HCT116 (cell line): ENCODE measurements at regions of chr2 and their contacts with region 1.

Region 1: GRCh38 chr2:66429071-66429477 is 5.9 kb upstream of the MEIS1 start:
- DNase-seq: peak; percentile 18
- ATAC-seq: 0 out of 2 replicates have a peak, but pooled peaks have one; percentile 53
- H3K4me3 ChIP-seq: no peak overlapping the region
- H3K27ac ChIP-seq: no peak overlapping the region
- H3K4me1 ChIP-seq: no peaks in the 10 kb centered on the region
- H3K27me3 ChIP-seq: no peaks in the 10 kb centered on the region
- CTCF ChIP-seq: peak; percentile 36 to 79 (median 64); a peak in 5 of 6 replicates
- POLR2A ChIP-seq: no peak
- RAD21 ChIP-seq: peak; percentile 68

Region 2: GRCh38 chr2:65647249-65647842 is 781.7 kb before region 1 on chr2:
- CTCF ChIA-PET with region 1: no interaction called
- POLR2A ChIA-PET with region 1: no interaction called
- RAD21 ChIA-PET with region 1: no interaction called
- intact Hi-C with region 1: loop called (anchors 10 kb)
- DNase-seq: no peak
- ATAC-seq: no peak
- H3K4me3 ChIP-seq: no peak overlapping the region
- H3K27ac ChIP-seq: no peak overlapping the region
- H3K4me1 ChIP-seq: no peaks in the 10 kb centered on the region
- H3K27me3 ChIP-seq: no peaks in the 10 kb centered on the region
- CTCF ChIP-seq: no peak
- POLR2A ChIP-seq: no peak
- RAD21 ChIP-seq: no peak

Region 3: GRCh38 chr2:66649006-66649405 is 219.9 kb after region 1 on chr2:
- CTCF ChIA-PET with region 1: no interaction called
- POLR2A ChIA-PET with region 1: no interaction called
- RAD21 ChIA-PET with region 1: no interaction called
- intact Hi-C with region 1: no loop called
- DNase-seq: no peak
- ATAC-seq: no peak
- H3K4me3 ChIP-seq: no peak overlapping the region
- H3K27ac ChIP-seq: no peak overlapping the region
- H3K4me1 ChIP-seq: no peaks in the 10 kb centered on the region
- H3K27me3 ChIP-seq: no peaks in the 10 kb centered on the region
- CTCF ChIP-seq: no peak
- POLR2A ChIP-seq: no peak
- RAD21 ChIP-seq: no peak

Region 4: GRCh38 chr2:67322353-67323001 is 893.4 kb after region 1 on chr2:
- CTCF ChIA-PET with region 1: no interaction called
- POLR2A ChIA-PET with region 1: no interaction called
- RAD21 ChIA-PET with region 1: no interaction called
- intact Hi-C with region 1: loop called (anchors 1 kb)
- DNase-seq: peak; percentile 47
- ATAC-seq: peak; percentile 95
- H3K4me3 ChIP-seq: no peak overlapping the region
- H3K27ac ChIP-seq: no peak overlapping the region
- H3K4me1 ChIP-seq: no peaks in the 10 kb centered on the region
- H3K27me3 ChIP-seq: peaks cover 18% of the 10 kb centered on the region; the same call in 1 of the 2 replicates
- CTCF ChIP-seq: peak; percentile 26 to 52 (median 50); a peak in 3 of 6 replicates
- POLR2A ChIP-seq: no peak
- RAD21 ChIP-seq: peak; percentile 70

Region 5: GRCh38 chr2:67476809-67477790 is 1048.0 kb after region 1 on chr2:
- CTCF ChIA-PET with region 1: no interaction called
- POLR2A ChIA-PET with region 1: no interaction called
- RAD21 ChIA-PET with region 1: no interaction called
- intact Hi-C with region 1: loop called (anchors 2 kb)
- DNase-seq: peak; percentile 12
- ATAC-seq: peak; percentile 73
- H3K4me3 ChIP-seq: no peak overlapping the region
- H3K27ac ChIP-seq: no peak overlapping the region
- H3K4me1 ChIP-seq: no peaks in the 10 kb centered on the region
- H3K27me3 ChIP-seq: no peaks in the 10 kb centered on the region; the same call in 1 of the 2 replicates
- CTCF ChIP-seq: peak; percentile 29 to 54 (median 38); a peak in 4 of 6 replicates
- POLR2A ChIP-seq: no peak
- RAD21 ChIP-seq: peak; percentile 66

Region 6: GRCh38 chr2:67650291-67651133 is 1221.4 kb after region 1 on chr2:
- CTCF ChIA-PET with region 1: no interaction called
- POLR2A ChIA-PET with region 1: no interaction called
- RAD21 ChIA-PET with region 1: no interaction called
- intact Hi-C with region 1: loop called (anchors 2 kb)
- DNase-seq: peak; percentile 6
- ATAC-seq: peak; percentile 79
- H3K4me3 ChIP-seq: no peak overlapping the region
- H3K27ac ChIP-seq: no peak overlapping the region
- H3K4me1 ChIP-seq: no peaks in the 10 kb centered on the region
- H3K27me3 ChIP-seq: peaks cover 12% of the 10 kb centered on the region; the same call in 1 of the 2 replicates
- CTCF ChIP-seq: peak in 2 of 3 experiments; percentile 56 to 65; a peak in 4 of 6 replicates
- POLR2A ChIP-seq: no peak
- RAD21 ChIP-seq: peak; percentile 59

Region 7: DNA sequence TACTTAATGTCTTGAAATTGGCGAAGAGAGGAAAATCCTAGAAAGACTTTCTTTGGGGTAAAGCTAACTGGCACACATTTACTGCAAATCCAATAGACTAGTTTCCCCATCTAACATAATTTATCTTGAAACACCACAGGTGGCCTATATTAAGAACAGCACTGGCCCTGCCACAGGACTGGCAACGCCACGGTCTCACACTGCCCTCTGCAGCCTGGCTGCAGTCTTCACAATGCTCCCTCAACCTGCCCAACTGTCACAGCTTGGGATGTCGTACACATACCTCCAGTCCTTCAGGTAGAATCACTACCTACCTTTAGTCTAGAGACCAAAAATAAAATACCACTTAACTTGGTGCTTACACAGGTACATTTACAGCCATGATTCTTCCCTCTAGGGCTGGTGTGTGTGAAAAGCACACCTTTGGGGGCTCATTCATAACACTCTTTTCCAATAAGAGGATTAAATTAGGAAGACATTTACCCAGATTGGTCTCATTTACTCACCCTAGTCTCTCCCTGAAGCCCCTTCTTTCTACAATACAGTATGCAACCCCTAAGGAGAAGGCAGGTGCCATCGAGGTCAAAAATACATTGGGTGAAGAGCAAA is 1411.5 kb after region 1 on chr2:
- CTCF ChIA-PET with region 1: interaction called, 4 read pairs
- POLR2A ChIA-PET with region 1: no interaction called
- RAD21 ChIA-PET with region 1: no interaction called
- intact Hi-C with region 1: loop called (anchors 2 kb)
- DNase-seq: peak; percentile 32
- ATAC-seq: peak; percentile 100
- H3K4me3 ChIP-seq: no peak overlapping the region
- H3K27ac ChIP-seq: no peak overlapping the region
- H3K4me1 ChIP-seq: no peaks in the 10 kb centered on the region
- H3K27me3 ChIP-seq: peaks cover 36% of the 10 kb centered on the region
- CTCF ChIP-seq: peak; percentile 48 to 79 (median 75); a peak in 5 of 6 replicates
- POLR2A ChIP-seq: no peak
- RAD21 ChIP-seq: peak; percentile 84